Posterior vena cava (tissue), 2 donors: ENCODE measurements at regions of chr16 and their contacts with region 1.

Region 1: GRCh38 chr16:83125999-83126568 is 499.3 kb downstream of the CDH13 start:
- DNase-seq: no peak

Region 2: DNA sequence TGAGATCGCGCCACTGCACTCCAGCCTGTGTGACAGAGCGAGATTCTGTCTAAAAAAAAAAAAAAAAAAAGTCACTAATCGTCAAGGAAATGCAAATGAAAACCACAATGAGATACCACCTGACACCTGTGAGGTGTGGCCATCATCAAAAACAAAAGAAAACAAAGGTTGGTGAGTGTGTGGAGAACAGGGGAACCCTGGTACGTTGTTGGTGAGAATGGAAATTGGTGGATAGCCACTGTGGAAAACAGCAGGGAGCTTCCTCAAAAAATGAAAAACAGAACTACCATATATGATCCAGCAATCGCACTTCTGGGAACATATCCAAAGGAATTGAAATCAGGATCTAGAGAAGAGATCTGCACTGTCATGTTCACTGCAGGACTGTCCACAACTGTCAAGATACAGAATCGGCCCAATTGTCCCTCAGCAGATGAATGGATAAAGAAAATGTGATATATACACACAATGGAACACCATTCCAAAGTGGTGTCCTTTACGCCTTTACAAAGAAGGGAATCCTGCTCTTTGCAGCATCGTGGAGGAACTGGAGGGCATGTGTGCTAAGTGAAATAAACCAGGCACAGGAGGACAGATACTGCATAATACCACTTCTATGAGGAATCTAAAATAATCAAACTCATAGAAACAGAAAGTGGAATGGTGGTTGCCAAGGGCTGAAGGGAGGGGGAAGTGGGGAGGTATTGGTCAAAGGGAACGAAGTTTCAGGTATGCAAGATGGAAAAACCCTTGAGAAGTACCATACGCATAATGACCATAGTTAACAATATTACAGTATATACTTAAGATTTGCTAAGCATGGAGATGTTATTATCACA is 1410.5 kb before region 1 on chr16:
- intact Hi-C with region 1: no loop called
- DNase-seq: no peak

Region 3: GRCh38 chr16:81841722-81842121 is 1284.4 kb before region 1 on chr16:
- intact Hi-C with region 1: loop called in 1 of 2 experiments (anchors 5 kb)
- DNase-seq: no peak